ENCODE measurements at regions of chr11 and their contacts with region 1.

Region 1: DNA sequence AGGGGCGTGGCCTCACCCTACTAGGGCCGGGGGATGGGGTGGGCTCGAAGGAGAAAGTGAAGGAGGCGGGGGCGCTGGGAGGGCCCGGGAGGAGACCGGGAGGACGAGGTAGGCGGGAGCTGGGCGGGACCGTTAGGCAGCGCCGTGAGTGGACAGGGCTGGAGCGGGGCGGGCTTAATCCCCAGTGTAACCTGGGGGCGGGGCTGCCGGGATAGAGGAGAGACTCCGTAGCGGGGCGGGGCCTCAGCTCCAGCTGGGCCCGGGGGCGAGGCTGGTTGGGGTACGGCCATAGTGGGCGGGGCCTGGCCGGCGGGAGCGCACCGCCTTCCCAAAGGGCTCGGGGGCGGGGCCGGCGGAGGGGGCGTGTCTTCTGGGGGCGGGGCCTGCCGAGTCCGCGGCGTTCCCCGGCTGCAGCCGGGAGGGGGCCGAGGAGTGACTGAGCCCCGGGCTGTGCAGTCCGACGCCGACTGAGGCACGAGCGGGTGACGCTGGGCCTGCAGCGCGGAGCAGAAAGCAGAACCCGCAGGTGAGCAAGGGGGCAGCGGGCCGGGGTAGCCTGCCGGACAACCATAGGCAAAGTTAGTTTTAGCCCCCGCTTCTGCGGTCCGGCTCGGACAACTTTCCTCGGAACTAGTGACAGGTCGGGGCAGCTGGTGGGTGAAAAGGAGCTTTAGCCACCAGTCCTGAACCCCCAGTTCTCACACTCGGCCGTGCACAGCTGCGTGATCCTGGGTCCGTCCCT is at the start of gene CD82:
- DNase-seq: peak; percentile 100
- ATAC-seq: peak; percentile 75 to 78
- H3K4me3 ChIP-seq: peak within 1 kb of the TSS; percentile 65 to 79 (median 72)
- H3K27ac ChIP-seq: peak within 1 kb of the TSS; percentile 98 to 99 (median 98)
- H3K4me1 ChIP-seq: peaks cover 24 to 26% of the 10 kb centered on the region in 2 donors
- H3K27me3 ChIP-seq: no peaks in the 10 kb centered on the region
- CTCF ChIP-seq: peak in 4 of 5 experiments; percentile 12 to 44 (median 24)
- POLR2A ChIP-seq: peak; percentile 47 to 58
- total RNA-seq, gene CD82: 4.5 to 17.5 (median 13.5) TPM

Region 2: GRCh38 chr11:44427432-44427831 is 137.9 kb before region 1 on chr11:
- in situ Hi-C with region 1: no loop called
- intact Hi-C with region 1: no loop called
- DNase-seq: no peak
- ATAC-seq: no peak
- H3K4me3 ChIP-seq: no peak overlapping the region
- H3K27ac ChIP-seq: no peak overlapping the region
- H3K4me1 ChIP-seq: no peaks in the 10 kb centered on the region
- H3K27me3 ChIP-seq: no peaks in the 10 kb centered on the region
- CTCF ChIP-seq: no peak
- POLR2A ChIP-seq: no peak

Region 3: GRCh38 chr11:44505581-44506054 is 59.8 kb before region 1 on chr11:
- in situ Hi-C with region 1: no loop called
- intact Hi-C with region 1: no loop called
- DNase-seq: no peak
- ATAC-seq: no peak
- H3K4me3 ChIP-seq: no peak overlapping the region
- H3K27ac ChIP-seq: no peak overlapping the region
- H3K4me1 ChIP-seq: no peaks in the 10 kb centered on the region
- H3K27me3 ChIP-seq: no peaks in the 10 kb centered on the region
- CTCF ChIP-seq: no peak
- POLR2A ChIP-seq: no peak

Region 4: GRCh38 chr11:44580701-44581100 is 15.3 kb after region 1 on chr11:
- in situ Hi-C with region 1: no loop called
- intact Hi-C with region 1: no loop called
- DNase-seq: no peak
- ATAC-seq: no peak
- H3K4me3 ChIP-seq: no peak overlapping the region
- H3K27ac ChIP-seq: no peak overlapping the region
- H3K4me1 ChIP-seq: peaks cover 10 to 23% of the 10 kb centered on the region in 2 donors
- H3K27me3 ChIP-seq: no peaks in the 10 kb centered on the region
- CTCF ChIP-seq: no peak
- POLR2A ChIP-seq: no peak

Region 5: DNA sequence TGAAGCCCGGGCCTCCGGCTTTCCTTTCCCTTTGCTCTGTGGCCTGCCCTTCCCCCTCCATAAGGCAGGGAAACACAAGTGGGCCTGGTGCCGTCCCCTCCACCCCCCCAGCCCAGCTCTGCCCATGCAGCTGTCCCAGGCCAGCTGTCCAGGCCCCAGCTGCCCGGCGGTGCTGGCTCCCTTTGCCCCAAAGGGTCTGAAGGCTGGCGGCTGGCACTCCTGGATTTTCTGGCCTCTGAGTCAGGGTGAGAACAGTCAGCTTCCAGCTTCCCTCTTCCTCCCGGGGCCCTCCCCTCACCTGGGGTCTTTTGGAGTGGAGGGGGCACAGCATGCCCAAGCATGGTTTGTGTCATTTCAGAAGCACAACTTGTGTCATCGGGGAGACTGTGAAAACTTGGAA is 27.9 kb after region 1 on chr11:
- in situ Hi-C with region 1: no loop called
- intact Hi-C with region 1: loop called (anchors 1 kb)
- DNase-seq: peak; percentile 63 to 88
- ATAC-seq: peak; percentile 48 to 71
- H3K4me3 ChIP-seq: peak overlapping the region in 1 of 4 donors; percentile 9
- H3K27ac ChIP-seq: peak overlapping the region; percentile 72 to 78 (median 76)
- H3K4me1 ChIP-seq: peaks cover 51 to 58% of the 10 kb centered on the region in 2 donors
- H3K27me3 ChIP-seq: no peaks in the 10 kb centered on the region
- CTCF ChIP-seq: no peak
- POLR2A ChIP-seq: no peak

Region 6: GRCh38 chr11:44611687-44612434 is 46.5 kb after region 1 on chr11:
- in situ Hi-C with region 1: loop called in 1 of 4 experiments (anchors 5 kb)
- intact Hi-C with region 1: no loop called
- DNase-seq: no peak
- ATAC-seq: no peak
- H3K4me3 ChIP-seq: no peak overlapping the region
- H3K27ac ChIP-seq: no peak overlapping the region
- H3K4me1 ChIP-seq: peaks cover 7 to 19% of the 10 kb centered on the region in 2 donors
- H3K27me3 ChIP-seq: no peaks in the 10 kb centered on the region
- CTCF ChIP-seq: no peak
- POLR2A ChIP-seq: no peak

Region 7: DNA sequence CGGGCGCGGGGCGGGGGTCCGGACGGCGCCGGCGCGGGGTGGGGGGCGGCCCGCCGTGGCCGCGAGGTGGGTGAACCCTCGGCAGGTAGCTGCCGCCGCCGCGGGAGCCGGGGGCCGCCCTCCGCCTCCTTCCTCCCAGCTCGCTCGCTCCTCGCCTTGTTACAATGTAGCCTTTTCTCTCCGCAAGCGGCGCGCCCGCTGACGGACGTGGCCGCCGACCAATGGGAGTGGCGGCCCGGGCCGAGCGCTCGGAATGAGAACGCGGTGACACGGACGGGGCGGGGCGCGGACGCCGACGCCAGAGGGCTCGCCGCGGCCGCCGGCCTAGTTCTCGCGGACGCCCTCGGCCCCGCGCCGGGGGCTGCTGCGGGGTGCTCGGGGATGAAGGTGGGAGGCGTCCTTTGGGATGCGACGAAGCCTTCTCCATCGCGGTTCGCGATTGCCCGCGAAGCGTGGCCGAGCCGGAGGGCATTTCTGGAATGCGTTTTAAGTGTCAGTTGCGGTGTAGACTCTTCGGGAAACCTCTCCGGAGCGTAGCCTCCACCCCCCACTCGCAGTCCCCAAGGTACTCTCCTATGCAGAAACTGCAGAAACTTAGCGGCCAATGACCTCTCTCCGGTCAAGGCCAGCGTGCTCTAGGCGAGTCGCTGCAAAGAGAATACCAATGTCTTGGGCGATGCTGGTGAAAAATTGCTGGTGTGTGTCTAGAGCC is 581.8 kb after region 1 on chr11:
- in situ Hi-C with region 1: no loop called
- intact Hi-C with region 1: loop called (anchors 5 kb)
- DNase-seq: peak; percentile 89 to 95
- ATAC-seq: peak; percentile 92 to 95
- H3K4me3 ChIP-seq: peak overlapping the region; percentile 80 to 87 (median 84)
- H3K27ac ChIP-seq: peak overlapping the region; percentile 95 to 100 (median 98)
- H3K4me1 ChIP-seq: peaks cover 16 to 22% of the 10 kb centered on the region in 2 donors
- H3K27me3 ChIP-seq: no peaks in the 10 kb centered on the region
- CTCF ChIP-seq: peak in 2 of 5 experiments; percentile 17 to 18
- POLR2A ChIP-seq: peak; percentile 63 to 81